Naive thymus-derived CD4-positive, alpha-beta T cell (primary cell): ENCODE measurements at regions of chr9 and their contacts with region 1.

Region 1: GRCh38 chr9:108933718-108934322 is at the start of gene ELP1:
- DNase-seq: peak; percentile 88 to 93 (median 91)
- ATAC-seq: peak; percentile 91
- H3K4me3 ChIP-seq: peak within 1 kb of the TSS; percentile 90
- H3K4me3 Mint-ChIP-seq: peak within 1 kb of the TSS; percentile 88 to 100 (median 99)
- H3K27ac ChIP-seq: peak within 1 kb of the TSS; percentile 92
- H3K27ac Mint-ChIP-seq: peak within 1 kb of the TSS; percentile 96 to 99 (median 98)
- H3K4me1 ChIP-seq: peaks cover 15 to 18% of the 10 kb centered on the region in 2 donors
- H3K4me1 Mint-ChIP-seq: peaks cover 23 to 54% (median 38%) of the 10 kb centered on the region in 7 donors
- H3K27me3 ChIP-seq: no peaks in the 10 kb centered on the region
- H3K27me3 Mint-ChIP-seq: no peaks in the 10 kb centered on the region
- total RNA-seq, gene ELP1: 21.7 to 41.4 (median 26.5) TPM

Region 2: DNA sequence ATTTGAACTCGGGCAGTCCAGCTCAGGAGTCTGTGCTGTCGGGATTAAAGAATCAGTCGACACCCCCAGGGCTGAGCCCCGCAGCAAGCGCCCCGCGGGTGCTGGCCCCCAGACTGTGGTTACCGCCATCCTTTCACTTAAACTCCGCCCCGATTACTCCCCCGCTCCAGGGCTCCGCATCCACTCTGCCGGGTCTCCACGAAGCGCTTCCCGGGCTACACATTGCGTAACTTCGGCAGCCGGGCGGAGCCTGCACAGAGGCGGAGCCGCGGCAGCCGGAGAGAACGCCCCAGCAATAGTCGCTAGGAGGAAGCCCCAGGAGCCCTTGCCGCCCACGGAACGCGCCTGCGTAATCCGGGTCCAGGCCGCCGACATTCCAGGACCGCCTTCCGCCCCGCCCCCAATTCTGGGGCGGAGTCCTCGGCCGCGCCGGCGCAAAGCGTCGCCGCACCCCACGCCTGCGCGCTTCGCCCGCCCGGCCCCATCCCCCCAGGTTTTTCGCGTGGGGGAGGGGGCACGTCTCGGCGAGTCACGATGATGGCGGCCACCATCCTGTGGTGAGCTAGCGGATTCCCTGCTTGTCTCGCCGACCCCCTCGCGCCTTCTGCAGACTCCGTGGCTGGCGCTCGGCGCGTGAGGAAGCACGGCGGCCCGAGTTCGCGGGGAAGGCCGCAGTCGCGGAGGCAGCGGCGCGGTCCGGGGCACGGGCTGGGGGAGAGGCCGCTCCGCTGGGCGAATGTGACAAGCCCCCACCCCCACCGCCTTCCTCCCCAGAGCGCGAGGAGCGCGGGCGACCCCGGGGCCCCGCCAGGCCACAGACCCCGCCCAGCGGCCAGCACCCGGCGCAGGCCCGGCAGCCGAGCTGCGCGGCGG is 1650.8 kb before region 1 on chr9 and contains the start of gene RAD23B:
- CTCF ChIA-PET with region 1: no interaction called
- POLR2A ChIA-PET with region 1: no interaction called
- intact Hi-C with region 1: loop called (anchors 2 kb)
- DNase-seq: peak; percentile 97 to 100 (median 99)
- ATAC-seq: peak; percentile 94
- H3K4me3 ChIP-seq: peak within 1 kb of the TSS; percentile 78
- H3K4me3 Mint-ChIP-seq: peak within 1 kb of the TSS; percentile 89 to 99 (median 96)
- H3K27ac ChIP-seq: peak within 1 kb of the TSS; percentile 92
- H3K27ac Mint-ChIP-seq: peak within 1 kb of the TSS; percentile 85 to 97 (median 95)
- H3K4me1 ChIP-seq: peaks cover 9 to 31% of the 10 kb centered on the region in 2 donors
- H3K4me1 Mint-ChIP-seq: peaks cover 28 to 52% (median 37%) of the 10 kb centered on the region in 7 donors
- H3K27me3 ChIP-seq: no peaks in the 10 kb centered on the region
- H3K27me3 Mint-ChIP-seq: peaks cover 0 to 9% (median 0%) of the 10 kb centered on the region in 5 donors
- total RNA-seq, gene RAD23B: 48.7 to 102 (median 55.6) TPM

Region 3: DNA sequence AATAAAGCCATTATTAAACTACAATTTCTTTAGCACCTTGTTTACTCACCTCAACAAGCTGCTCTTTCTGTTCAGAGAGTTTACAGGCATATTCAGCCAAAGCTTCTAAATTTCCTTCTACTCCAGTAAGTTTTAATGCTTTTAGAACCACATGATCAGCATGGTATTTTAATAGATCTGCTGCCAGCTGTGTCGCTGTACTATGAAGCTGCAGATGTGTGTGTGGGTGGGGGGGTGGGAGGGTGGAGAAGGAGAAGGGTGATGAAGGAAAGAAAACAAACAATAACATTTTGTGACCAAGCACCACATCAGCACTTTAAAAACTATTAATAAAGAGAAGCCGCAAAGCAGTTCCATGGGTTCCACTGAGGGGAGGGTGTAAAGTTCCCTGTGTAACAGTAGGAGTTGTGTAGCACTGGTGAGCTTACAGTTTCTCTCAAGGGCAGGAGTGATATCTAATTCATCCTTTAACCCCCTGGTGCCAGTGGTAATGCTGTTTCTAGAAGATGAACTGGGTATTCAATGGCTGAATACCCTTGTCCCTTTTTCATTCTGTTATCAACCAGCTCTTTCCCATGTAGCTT is 38.9 kb after region 1 on chr9:
- CTCF ChIA-PET with region 1: no interaction called
- POLR2A ChIA-PET with region 1: no interaction called
- intact Hi-C with region 1: no loop called
- DNase-seq: no peak
- ATAC-seq: no peak
- H3K4me3 ChIP-seq: no peak overlapping the region
- H3K4me3 Mint-ChIP-seq: no peak overlapping the region
- H3K27ac ChIP-seq: no peak overlapping the region
- H3K27ac Mint-ChIP-seq: no peak overlapping the region
- H3K4me1 ChIP-seq: no peaks in the 10 kb centered on the region
- H3K4me1 Mint-ChIP-seq: peaks cover 0 to 1% (median 0%) of the 10 kb centered on the region in 7 donors
- H3K27me3 ChIP-seq: no peaks in the 10 kb centered on the region
- H3K27me3 Mint-ChIP-seq: no peaks in the 10 kb centered on the region

Region 4: DNA sequence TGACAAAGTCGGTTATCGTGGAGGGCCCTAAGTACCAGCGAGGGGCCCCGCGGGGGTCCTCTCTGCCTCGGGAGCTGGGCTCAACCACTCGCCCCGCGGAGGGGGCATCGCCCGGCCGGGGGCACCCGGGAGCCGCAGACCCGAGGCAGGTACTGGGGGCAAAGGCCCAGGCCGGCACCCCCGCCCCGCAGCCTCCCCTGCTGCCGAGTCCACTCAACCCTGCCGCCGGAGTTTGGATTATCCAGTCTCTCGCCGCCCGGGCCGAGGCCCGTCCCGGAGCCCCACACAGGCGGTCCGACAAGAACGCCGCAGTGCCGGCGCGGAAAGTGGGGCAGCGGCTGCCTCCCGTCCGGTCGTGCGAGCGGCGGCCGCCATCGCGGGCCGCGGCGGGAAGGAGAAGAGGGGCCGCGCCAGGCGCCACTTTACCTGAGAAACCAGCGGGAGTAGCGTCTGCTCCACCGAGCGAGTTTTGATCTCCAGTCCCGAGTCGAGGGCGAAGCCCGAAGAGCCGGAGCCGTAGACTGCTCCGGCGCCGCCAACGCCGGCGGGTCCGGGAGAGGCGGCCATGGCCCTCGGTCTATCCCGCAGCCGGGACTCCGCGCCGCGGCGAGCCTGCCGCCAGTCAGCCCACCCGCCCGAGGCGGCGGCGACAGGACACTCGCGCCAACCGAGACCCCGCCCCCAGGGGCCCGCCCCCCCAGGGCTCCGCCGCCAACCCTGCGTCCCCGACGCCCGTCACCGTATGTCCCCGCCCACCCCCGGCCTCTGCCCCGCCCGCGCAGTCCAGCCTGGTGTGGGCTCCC is 79.3 kb after region 1 on chr9 and contains the start of gene CTNNAL1:
- CTCF ChIA-PET with region 1: no interaction called
- POLR2A ChIA-PET with region 1: interaction called, 3 read pairs
- intact Hi-C with region 1: loop called (anchors 1 kb)
- DNase-seq: peak; percentile 68 to 88 (median 78)
- ATAC-seq: peak; percentile 98
- H3K4me3 ChIP-seq: peak within 1 kb of the TSS; percentile 72
- H3K4me3 Mint-ChIP-seq: peak within 1 kb of the TSS; percentile 93 to 99 (median 97)
- H3K27ac ChIP-seq: peak within 1 kb of the TSS; percentile 77
- H3K27ac Mint-ChIP-seq: peak within 1 kb of the TSS; percentile 79 to 95 (median 92)
- H3K4me1 ChIP-seq: peaks cover 6 to 13% of the 10 kb centered on the region in 2 donors
- H3K4me1 Mint-ChIP-seq: peaks cover 17 to 34% (median 21%) of the 10 kb centered on the region in 7 donors
- H3K27me3 ChIP-seq: no peaks in the 10 kb centered on the region
- H3K27me3 Mint-ChIP-seq: peaks cover 0 to 22% (median 4%) of the 10 kb centered on the region in 5 donors
- total RNA-seq, gene CTNNAL1: 1.1 to 9.9 (median 2.5) TPM

Region 5: GRCh38 chr9:109119439-109120203 is 185.8 kb after region 1 on chr9 and contains the start of gene TMEM245:
- CTCF ChIA-PET with region 1: no interaction called
- POLR2A ChIA-PET with region 1: interaction called, 4 read pairs
- intact Hi-C with region 1: loop called (anchors 1 kb)
- DNase-seq: peak; percentile 78 to 97 (median 95)
- ATAC-seq: peak; percentile 97
- H3K4me3 ChIP-seq: peak within 1 kb of the TSS; percentile 84
- H3K4me3 Mint-ChIP-seq: peak within 1 kb of the TSS; percentile 93 to 98 (median 94)
- H3K27ac ChIP-seq: peak within 1 kb of the TSS; percentile 92
- H3K27ac Mint-ChIP-seq: peak within 1 kb of the TSS; percentile 76 to 95 (median 91)
- H3K4me1 ChIP-seq: peaks cover 23 to 31% of the 10 kb centered on the region in 2 donors
- H3K4me1 Mint-ChIP-seq: peaks cover 36 to 47% (median 39%) of the 10 kb centered on the region in 7 donors
- H3K27me3 ChIP-seq: no peaks in the 10 kb centered on the region
- H3K27me3 Mint-ChIP-seq: no peaks in the 10 kb centered on the region
- total RNA-seq, gene TMEM245: 25.5 to 76.7 (median 29.2) TPM

Region 6: DNA sequence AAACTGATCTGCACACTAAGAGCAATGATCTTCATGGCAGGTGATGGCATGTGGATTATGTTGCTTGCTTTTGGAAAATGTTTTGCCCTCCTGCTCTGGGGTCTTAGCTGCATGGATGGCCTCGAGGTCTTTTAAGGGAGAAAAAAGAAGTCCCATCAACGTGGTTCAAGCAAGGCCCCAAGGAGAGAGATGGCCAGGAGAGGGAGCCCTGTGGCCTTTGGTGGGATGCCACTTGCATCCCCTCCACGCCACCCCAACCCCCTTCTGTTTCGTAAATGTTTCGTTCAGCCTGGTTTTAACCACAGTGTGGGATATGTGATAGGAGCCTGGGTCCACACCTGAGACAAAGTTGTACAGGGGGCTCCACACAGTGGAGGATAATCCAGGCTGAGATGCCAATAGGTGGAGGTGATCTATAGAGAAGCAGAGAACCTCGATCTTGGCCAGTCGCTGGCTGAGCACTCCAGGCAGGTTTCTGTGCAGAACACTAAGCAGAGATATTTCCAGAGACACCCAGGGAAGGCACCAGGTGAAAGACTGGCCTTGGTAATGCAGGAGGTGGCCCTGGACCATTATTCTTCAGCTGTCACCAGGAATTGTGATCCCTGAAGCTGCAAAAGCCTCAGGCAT is 259.0 kb after region 1 on chr9:
- CTCF ChIA-PET with region 1: no interaction called
- POLR2A ChIA-PET with region 1: no interaction called
- intact Hi-C with region 1: loop called in 1 of 2 experiments (anchors 10 kb)
- DNase-seq: no peak
- ATAC-seq: no peak
- H3K4me3 ChIP-seq: no peak overlapping the region
- H3K4me3 Mint-ChIP-seq: no peak overlapping the region
- H3K27ac ChIP-seq: no peak overlapping the region
- H3K27ac Mint-ChIP-seq: no peak overlapping the region
- H3K4me1 ChIP-seq: no peaks in the 10 kb centered on the region
- H3K4me1 Mint-ChIP-seq: peaks cover 0 to 4% (median 0%) of the 10 kb centered on the region in 7 donors
- H3K27me3 ChIP-seq: no peaks in the 10 kb centered on the region
- H3K27me3 Mint-ChIP-seq: peaks cover 0 to 11% (median 0%) of the 10 kb centered on the region in 5 donors

Region 7: DNA sequence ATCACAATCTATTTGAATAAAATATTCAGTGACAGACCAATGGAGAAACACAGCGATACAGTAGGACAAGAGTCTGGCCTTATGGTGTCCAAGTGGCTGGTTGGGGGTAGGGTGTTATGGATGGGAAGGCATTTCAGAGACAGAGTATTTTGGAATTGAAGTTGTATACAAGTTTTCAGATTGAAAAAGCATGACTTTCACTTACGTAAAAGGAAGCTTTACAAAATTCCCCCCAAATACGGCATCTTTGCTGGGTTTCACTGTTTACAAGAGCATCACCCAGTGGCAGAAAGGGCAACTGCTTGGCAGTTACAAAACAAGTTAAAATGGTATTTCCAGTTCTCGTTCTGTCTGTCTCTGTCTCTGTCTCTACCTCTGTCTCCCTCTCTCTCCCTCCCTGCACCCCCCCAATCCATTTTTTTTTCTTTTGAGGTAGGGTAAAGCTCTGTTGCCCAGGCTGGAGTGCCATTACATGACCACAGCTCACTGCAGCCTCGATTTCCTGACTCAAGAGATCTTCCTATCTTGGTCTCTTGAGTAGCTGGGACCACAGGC is 478.1 kb after region 1 on chr9:
- CTCF ChIA-PET with region 1: no interaction called
- POLR2A ChIA-PET with region 1: no interaction called
- intact Hi-C with region 1: loop called in 1 of 2 experiments (anchors 10 kb)
- DNase-seq: no peak
- ATAC-seq: no peak
- H3K4me3 ChIP-seq: no peak overlapping the region
- H3K4me3 Mint-ChIP-seq: peak overlapping the region in 1 of 10 donors; percentile 48
- H3K27ac ChIP-seq: no peak overlapping the region
- H3K27ac Mint-ChIP-seq: peak overlapping the region in 1 of 9 donors; percentile 81
- H3K4me1 ChIP-seq: no peaks in the 10 kb centered on the region
- H3K4me1 Mint-ChIP-seq: peaks cover 0 to 53% (median 0%) of the 10 kb centered on the region in 7 donors
- H3K27me3 ChIP-seq: no peaks in the 10 kb centered on the region
- H3K27me3 Mint-ChIP-seq: peaks cover 0 to 21% (median 17%) of the 10 kb centered on the region in 5 donors

Region 8: GRCh38 chr9:110256380-110257096 is 1322.7 kb after region 1 on chr9 and contains the start of gene TXN:
- CTCF ChIA-PET with region 1: no interaction called
- POLR2A ChIA-PET with region 1: no interaction called
- intact Hi-C with region 1: loop called (anchors 5 kb)
- DNase-seq: peak; percentile 56 to 91 (median 74)
- ATAC-seq: peak; percentile 88
- H3K4me3 ChIP-seq: peak within 1 kb of the TSS; percentile 85
- H3K4me3 Mint-ChIP-seq: peak within 1 kb of the TSS; percentile 83 to 99 (median 96)
- H3K27ac ChIP-seq: peak within 1 kb of the TSS; percentile 65
- H3K27ac Mint-ChIP-seq: peak within 1 kb of the TSS; percentile 87 to 97 (median 89)
- H3K4me1 ChIP-seq: peaks cover 4 to 11% of the 10 kb centered on the region in 2 donors
- H3K4me1 Mint-ChIP-seq: peaks cover 16 to 52% (median 32%) of the 10 kb centered on the region in 7 donors
- H3K27me3 ChIP-seq: no peaks in the 10 kb centered on the region
- H3K27me3 Mint-ChIP-seq: peaks cover 0 to 5% (median 0%) of the 10 kb centered on the region in 5 donors
- total RNA-seq, gene TXN: 22.2 to 276 (median 24.9) TPM